ENCODE measurements at regions of chr2 and their contacts with region 1.

Region 1: DNA sequence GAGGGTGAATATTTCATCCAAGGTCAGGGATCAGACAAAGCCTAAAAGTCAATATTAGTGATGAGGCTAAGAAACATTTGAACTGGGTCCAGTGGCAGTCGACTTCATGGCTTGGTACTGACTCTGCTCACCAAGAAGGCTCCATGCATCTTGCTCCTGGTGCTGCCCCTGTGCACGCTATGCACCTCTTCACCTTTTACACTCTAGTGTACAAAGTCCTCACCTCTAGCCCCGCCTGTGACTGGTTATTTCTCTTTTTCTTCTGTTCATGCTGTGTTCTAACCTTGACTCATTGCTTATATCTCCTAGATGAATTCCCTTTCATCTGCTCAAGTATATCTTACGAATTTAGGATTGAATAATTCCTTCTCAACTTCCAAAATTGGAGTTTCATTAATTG is 52.4 kb upstream of the ZNF385B start:
- DNase-seq: no peak
- ATAC-seq: no peak
- H3K4me3 ChIP-seq: no peak overlapping the region
- H3K27ac ChIP-seq: no peak overlapping the region
- H3K4me1 ChIP-seq: no peaks in the 10 kb centered on the region
- H3K27me3 ChIP-seq: peaks cover 4% of the 10 kb centered on the region
- CTCF ChIP-seq: no peak
- POLR2A ChIP-seq: no peak
- RAD21 ChIP-seq: no peak

Region 2: DNA sequence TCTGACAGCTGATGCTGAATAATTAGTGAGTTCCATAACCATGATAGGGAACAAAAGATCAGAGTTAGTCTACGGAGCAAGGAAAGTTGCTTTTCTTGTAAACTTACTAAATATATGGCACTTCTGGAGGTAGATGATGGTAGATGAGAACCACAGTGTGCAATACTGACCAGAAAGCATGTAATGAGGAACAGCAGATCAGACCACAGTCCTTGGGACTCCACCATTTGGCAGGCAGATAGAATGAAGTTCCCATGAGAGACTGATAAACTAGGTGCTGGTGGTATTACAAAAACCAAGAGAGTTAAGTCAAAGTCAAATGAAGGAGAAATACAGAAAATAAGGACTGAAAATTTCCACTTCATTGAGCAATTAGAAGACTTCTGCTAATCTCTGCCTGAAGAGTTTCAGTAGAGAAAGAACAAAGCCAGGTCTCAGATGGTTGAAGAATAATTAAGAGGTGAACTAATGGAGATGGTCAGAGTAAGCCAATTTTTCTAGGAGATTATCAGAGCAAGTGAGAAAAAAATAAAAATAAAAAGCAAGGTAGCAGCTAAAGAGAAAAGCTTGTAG is 1732.7 kb after region 1 on chr2:
- CTCF ChIA-PET with region 1: no interaction called
- POLR2A ChIA-PET with region 1: interaction called, 20 read pairs
- dilution Hi-C with region 1: no loop called
- in situ Hi-C with region 1: no loop called
- intact Hi-C with region 1: no loop called
- DNase-seq: no peak
- ATAC-seq: no peak
- H3K4me3 ChIP-seq: no peak overlapping the region
- H3K27ac ChIP-seq: no peak overlapping the region
- H3K4me1 ChIP-seq: no peaks in the 10 kb centered on the region
- H3K27me3 ChIP-seq: no peaks in the 10 kb centered on the region; the same call in 1 of the 2 replicates
- CTCF ChIP-seq: no peak
- POLR2A ChIP-seq: no peak
- RAD21 ChIP-seq: no peak

Measured in IMR-90 (cell line).